ENCODE measurements at regions of chr3 and their contacts with region 1.

Region 1: DNA sequence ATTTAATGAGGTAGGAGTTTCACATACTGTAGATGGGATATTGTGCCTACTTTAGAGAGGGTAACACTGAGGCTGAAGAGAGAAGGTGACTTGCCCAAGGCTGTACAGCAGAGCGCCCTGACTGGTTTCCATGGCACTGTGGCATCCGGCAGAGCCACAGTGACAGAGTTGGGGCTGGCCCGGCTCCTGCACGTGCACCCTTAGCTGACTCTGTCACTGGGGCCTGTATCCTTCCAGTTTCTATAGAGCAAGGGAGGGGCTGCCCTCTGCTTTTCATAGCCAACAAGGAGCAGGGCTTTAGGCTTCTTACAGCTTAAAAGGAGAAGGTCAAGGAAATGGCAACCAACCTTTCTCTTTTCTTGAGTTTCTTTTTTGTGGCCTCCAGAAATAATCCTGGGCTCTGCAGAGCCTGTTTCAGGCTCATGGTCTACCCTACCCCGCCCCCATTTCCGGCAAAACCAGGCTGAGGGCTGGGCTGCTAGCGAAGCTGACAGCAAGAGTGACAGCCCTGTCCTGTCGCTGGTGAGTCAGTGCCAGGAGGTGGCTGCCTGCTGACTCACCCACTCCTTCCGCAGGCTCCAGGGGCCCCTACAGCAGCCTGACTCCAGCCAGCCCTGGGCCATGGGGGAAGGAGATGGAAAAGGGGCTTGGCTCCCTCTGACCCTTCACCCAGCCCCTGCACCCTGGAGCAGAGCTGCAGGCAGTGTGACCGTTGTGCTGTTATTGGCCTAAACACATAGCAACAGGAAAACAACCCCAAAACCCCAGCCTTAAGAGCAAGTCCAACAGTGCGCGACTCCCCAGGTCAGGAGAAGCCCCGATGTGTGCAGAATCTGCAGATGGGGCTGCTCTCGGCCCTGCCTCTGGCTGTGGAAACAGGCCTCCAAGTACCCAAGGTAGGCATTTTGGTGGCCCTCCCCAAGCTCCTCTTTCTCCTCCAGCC is 29.8 kb downstream of the SLC6A6 start:
- DNase-seq: peak; percentile 98

Region 2: DNA sequence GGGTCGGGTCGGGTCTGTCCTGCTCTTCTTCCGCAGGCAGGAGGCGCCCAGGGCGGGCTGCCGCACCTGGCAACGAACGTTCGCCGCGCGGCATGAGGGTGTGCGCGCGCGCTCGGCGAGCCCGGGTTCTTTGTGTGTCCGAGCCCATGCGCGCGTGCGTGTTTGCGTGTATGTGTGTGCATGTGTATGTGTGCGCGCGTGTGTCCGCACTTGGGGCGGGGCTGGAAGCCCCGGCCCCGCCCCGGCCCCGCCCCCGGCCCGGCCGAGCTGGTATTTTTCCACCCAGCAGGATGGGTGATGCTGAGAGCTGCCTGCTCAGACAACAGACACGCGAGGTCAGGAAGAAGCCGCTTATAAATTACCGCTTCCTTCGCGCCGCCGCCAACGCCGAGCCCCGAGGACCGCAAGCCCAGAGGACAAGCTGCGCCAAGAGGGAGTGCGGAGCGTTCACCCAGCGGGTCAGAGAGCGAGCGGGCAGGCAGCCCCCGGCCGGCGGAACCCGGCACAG is 29.8 kb before region 1 on chr3 and contains the start of gene SLC6A6:
- intact Hi-C with region 1: loop called (anchors 2 kb)
- DNase-seq: peak; percentile 97
- total RNA-seq, gene SLC6A6: 129 TPM

Region 3: GRCh38 chr3:15051531-15051930 is 619.4 kb after region 1 on chr3:
- intact Hi-C with region 1: no loop called
- DNase-seq: no peak

Measured in cardiac septum (tissue), 1 donor.